Activated CD8-positive, alpha-beta T cell treated with anti-CD3 and anti-CD28 coated beads for 36 hours (primary cell): ENCODE measurements at regions of chr11 and their contacts with region 1.

Region 1: DNA sequence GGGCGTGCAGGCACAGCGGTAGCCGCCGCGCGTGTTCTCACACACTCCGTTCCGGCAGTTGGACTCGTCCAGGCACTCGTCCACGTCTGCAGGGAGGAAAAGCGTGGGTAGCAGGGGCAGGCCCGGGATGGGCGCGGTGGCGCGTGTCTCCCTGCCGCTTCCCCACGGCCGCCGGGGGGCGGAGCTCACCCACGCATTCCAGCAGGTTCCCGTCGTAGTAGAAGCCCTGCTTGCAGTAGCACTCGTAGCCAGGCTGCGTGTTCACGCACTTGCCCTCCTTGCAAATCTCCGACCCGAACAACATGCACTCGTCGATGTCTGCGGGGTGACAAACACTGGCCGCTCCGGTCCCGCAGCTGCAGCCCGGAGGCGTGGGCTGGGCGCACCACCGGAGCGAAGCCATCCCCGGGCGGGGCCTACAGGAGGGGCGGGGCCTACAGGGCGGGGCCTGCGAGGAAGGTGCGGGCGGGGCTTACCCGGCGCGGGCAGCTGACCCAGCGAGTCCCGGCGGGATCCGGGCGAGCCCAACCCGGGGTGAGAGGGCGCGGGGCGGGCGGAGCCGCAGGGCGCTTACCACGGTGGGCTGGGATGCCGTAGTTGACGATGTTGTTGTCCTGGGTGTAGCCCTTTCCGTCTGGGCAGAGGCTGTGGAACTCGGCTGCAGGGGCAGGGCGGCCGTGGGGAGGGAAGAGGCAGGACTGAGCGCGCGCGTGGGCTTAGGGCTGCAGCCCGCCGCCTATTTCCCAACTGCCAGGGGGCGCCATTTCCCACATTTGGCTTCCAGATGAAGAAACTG is 15.6 kb downstream of the SCYL1 start:
- DNase-seq: peak; percentile 92
- ATAC-seq: peak; percentile 93
- H3K4me3 Mint-ChIP-seq: peak overlapping the region; percentile 76
- H3K27ac Mint-ChIP-seq: peak overlapping the region; percentile 86
- H3K4me1 Mint-ChIP-seq: peaks cover 22% of the 10 kb centered on the region
- H3K27me3 Mint-ChIP-seq: no peaks in the 10 kb centered on the region
- CTCF ChIP-seq: peak; percentile 75

Region 2: DNA sequence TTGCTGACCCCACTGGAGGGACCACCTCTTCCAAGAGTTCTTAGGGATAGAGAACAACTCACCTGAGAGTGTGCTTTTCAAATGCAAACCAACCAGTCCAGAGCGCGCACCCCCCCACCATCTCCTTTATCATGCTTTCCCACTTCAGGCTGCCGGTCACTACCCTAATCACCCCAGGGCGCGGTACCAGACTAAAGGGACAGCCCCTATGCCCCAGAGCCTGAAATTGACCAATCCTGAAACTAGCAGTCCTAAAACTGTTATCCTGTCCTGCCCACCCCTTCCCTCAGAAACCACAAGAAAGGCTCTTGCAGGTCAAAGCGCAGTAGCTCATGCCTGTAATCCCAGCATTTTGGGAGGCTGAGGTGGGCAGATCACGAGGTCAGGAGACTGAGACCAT is 80.9 kb before region 1 on chr11:
- CTCF ChIA-PET with region 1: no interaction called
- POLR2A ChIA-PET with region 1: no interaction called
- intact Hi-C with region 1: no loop called
- DNase-seq: no peak
- ATAC-seq: no peak
- H3K4me3 Mint-ChIP-seq: no peak overlapping the region
- H3K27ac Mint-ChIP-seq: no peak overlapping the region
- H3K4me1 Mint-ChIP-seq: peaks cover 22% of the 10 kb centered on the region
- H3K27me3 Mint-ChIP-seq: no peaks in the 10 kb centered on the region
- CTCF ChIP-seq: no peak

Region 3: GRCh38 chr11:65524741-65525545 is 15.6 kb before region 1 on chr11 and contains the start of gene SCYL1:
- CTCF ChIA-PET with region 1: interaction called, 47 read pairs
- POLR2A ChIA-PET with region 1: interaction called, 18 read pairs
- intact Hi-C with region 1: no loop called
- DNase-seq: peak; percentile 79
- ATAC-seq: peak; percentile 93
- H3K4me3 Mint-ChIP-seq: peak within 1 kb of the TSS; percentile 93
- H3K27ac Mint-ChIP-seq: peak within 1 kb of the TSS; percentile 94
- H3K4me1 Mint-ChIP-seq: peaks cover 61% of the 10 kb centered on the region
- H3K27me3 Mint-ChIP-seq: no peaks in the 10 kb centered on the region
- CTCF ChIP-seq: no peak
- total RNA-seq, gene SCYL1: 71.5 to 76.8 TPM

Region 4: GRCh38 chr11:65551572-65552398 is 11.3 kb after region 1 on chr11:
- CTCF ChIA-PET with region 1: interaction called, 46 read pairs
- POLR2A ChIA-PET with region 1: interaction called, 26 read pairs
- intact Hi-C with region 1: no loop called
- DNase-seq: peak; percentile 77
- ATAC-seq: peak; percentile 38
- H3K4me3 Mint-ChIP-seq: no peak overlapping the region
- H3K27ac Mint-ChIP-seq: peak overlapping the region; percentile 14
- H3K4me1 Mint-ChIP-seq: peaks cover 73% of the 10 kb centered on the region
- H3K27me3 Mint-ChIP-seq: no peaks in the 10 kb centered on the region
- CTCF ChIP-seq: peak; percentile 61

Region 5: DNA sequence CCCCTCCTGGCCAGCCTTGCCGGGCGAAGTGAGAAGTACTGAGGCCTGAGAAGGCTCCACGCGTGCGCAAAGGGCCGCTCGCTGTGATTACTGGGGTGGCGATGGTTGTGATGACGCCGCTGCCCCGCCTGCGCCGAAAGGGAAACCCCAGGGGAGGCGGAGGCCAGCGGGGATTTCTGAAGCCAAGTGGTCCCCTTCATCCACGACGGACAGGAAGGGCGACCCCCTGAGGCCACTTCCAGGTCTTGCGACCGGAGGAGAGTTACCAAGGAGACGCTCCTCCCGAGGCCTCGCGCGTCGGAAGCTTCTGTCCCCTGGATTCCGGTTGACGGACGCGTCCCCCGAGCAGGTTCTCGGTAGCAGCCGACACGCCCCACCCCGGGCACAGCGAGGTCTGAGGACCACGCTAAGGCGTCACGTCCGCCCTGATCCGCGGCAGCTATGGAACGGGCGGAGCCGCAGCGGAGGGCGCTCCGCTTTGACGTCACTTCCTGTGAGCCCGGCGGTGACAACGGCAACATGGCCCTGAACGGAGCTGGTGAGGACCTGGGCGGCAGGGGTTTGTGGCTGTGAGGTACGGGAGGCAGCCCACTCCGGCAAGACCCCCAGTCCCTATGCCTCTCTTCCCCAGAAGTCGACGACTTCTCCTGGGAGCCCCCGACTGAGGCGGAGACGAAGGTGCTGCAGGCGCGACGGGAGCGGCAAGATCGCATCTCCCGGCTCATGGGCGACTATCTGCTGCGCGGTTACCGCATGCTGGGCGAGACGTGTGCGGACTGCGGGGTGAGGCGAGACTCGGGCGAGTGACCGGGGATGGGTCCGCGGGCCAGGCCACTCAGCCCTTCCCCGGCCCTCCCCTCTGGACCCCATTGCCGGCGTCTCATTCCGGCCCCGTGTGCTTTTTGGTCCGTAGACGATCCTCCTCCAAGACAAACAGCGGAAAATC is 29.8 kb after region 1 on chr11 and contains the start of gene ZNRD2:
- CTCF ChIA-PET with region 1: interaction called, 59 read pairs
- POLR2A ChIA-PET with region 1: interaction called, 25 read pairs
- intact Hi-C with region 1: loop called (anchors 5 kb)
- DNase-seq: peak; percentile 99
- ATAC-seq: peak; percentile 77
- H3K4me3 Mint-ChIP-seq: peak within 1 kb of the TSS; percentile 93
- H3K27ac Mint-ChIP-seq: peak within 1 kb of the TSS; percentile 97
- H3K4me1 Mint-ChIP-seq: peaks cover 57% of the 10 kb centered on the region
- H3K27me3 Mint-ChIP-seq: no peaks in the 10 kb centered on the region
- CTCF ChIP-seq: peak; percentile 27
- total RNA-seq, gene ZNRD2: 54.3 to 54.7 TPM

Region 6: GRCh38 chr11:65588199-65589054 is 47.9 kb after region 1 on chr11:
- CTCF ChIA-PET with region 1: interaction called, 54 read pairs
- POLR2A ChIA-PET with region 1: interaction called, 13 read pairs
- intact Hi-C with region 1: no loop called
- DNase-seq: peak; percentile 93
- ATAC-seq: peak; percentile 76
- H3K4me3 Mint-ChIP-seq: peak overlapping the region; percentile 36
- H3K27ac Mint-ChIP-seq: peak overlapping the region; percentile 94
- H3K4me1 Mint-ChIP-seq: peaks cover 40% of the 10 kb centered on the region
- H3K27me3 Mint-ChIP-seq: no peaks in the 10 kb centered on the region
- CTCF ChIP-seq: peak; percentile 75

Region 7: GRCh38 chr11:65615229-65615941 is 74.9 kb after region 1 on chr11 and contains the start of gene PCNX3:
- CTCF ChIA-PET with region 1: interaction called, 10 read pairs
- POLR2A ChIA-PET with region 1: interaction called, 4 read pairs
- intact Hi-C with region 1: no loop called
- DNase-seq: peak; percentile 100
- ATAC-seq: peak; percentile 90
- H3K4me3 Mint-ChIP-seq: peak within 1 kb of the TSS; percentile 93
- H3K27ac Mint-ChIP-seq: peak within 1 kb of the TSS; percentile 97
- H3K4me1 Mint-ChIP-seq: peaks cover 45% of the 10 kb centered on the region
- H3K27me3 Mint-ChIP-seq: no peaks in the 10 kb centered on the region
- CTCF ChIP-seq: no peak
- total RNA-seq, gene PCNX3: 34.3 to 34.4 TPM